Naive thymus-derived CD4-positive, alpha-beta T cell (primary cell): ENCODE measurements at regions of chr19 and their contacts with region 1.

Region 1: DNA sequence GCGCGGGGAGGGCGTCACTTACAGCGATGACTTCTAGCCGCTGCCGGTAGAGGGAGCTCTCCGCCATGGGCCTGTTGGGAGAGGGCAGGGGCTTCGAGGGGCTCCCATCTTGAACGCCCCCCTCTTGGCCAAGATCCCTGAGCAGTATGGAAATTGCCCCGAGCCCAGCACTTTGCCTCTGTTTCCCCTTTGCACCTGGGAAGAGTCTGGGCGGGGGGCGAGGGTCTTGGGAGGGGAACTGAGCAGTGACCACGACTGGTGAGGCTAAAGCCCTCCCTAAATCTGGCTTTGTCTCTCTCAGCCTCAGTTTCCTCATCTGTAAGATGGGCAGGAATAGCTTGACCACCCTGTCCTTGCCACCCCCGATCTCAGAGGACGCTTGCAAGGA is 2.8 kb downstream of the PALM3 start:
- DNase-seq: peak in 5 of 9 donors; percentile 30 to 66 (median 46)
- ATAC-seq: peak; percentile 68
- H3K4me3 ChIP-seq: no peak overlapping the region
- H3K4me3 Mint-ChIP-seq: peak overlapping the region in 9 of 10 donors; percentile 19 to 81 (median 55)
- H3K27ac ChIP-seq: no peak overlapping the region
- H3K27ac Mint-ChIP-seq: no peak overlapping the region
- H3K4me1 ChIP-seq: peaks cover 9 to 10% of the 10 kb centered on the region in 2 donors
- H3K4me1 Mint-ChIP-seq: peaks cover 9 to 26% (median 19%) of the 10 kb centered on the region in 7 donors
- H3K27me3 ChIP-seq: peaks cover 5 to 21% of the 10 kb centered on the region in 2 donors
- H3K27me3 Mint-ChIP-seq: peaks cover 16 to 48% (median 27%) of the 10 kb centered on the region in 5 donors

Region 2: DNA sequence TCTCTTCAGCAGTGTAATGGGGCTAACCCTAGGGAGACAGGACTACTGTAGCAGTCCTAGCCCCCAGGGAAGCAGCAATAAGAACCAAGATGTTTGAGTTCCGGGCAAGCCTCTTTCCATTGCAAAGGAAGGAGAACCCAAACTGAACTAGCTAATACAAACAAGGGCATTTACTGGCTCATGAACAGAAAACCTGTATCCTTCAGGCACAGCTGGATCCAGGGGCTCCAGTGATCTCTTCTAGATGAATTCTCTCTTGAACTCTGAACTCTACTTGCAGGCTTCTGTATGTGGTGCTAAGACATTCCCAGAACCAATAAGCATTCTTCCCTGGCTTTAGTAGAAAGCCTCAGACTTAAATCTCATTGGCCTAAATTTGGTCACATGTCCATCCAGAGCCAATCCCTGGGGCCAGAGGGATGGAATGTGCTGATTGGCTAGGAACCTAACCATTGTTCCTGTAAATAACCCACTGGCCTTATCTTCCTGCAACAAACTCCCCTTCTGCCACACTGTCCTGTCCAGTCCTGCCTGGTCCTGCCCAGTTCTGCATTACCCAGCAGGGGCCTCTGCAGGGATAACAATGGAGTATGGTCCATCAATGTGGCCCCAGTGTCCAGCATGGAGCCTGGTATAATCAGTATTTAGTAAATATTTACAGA is 116.9 kb before region 1 on chr19:
- CTCF ChIA-PET with region 1: no interaction called
- POLR2A ChIA-PET with region 1: no interaction called
- intact Hi-C with region 1: no loop called
- DNase-seq: no peak
- ATAC-seq: no peak
- H3K4me3 ChIP-seq: no peak overlapping the region
- H3K4me3 Mint-ChIP-seq: no peak overlapping the region
- H3K27ac ChIP-seq: no peak overlapping the region
- H3K27ac Mint-ChIP-seq: no peak overlapping the region
- H3K4me1 ChIP-seq: no peaks in the 10 kb centered on the region
- H3K4me1 Mint-ChIP-seq: peaks cover 0 to 4% (median 0%) of the 10 kb centered on the region in 7 donors
- H3K27me3 ChIP-seq: no peaks in the 10 kb centered on the region
- H3K27me3 Mint-ChIP-seq: peaks cover 0 to 8% (median 5%) of the 10 kb centered on the region in 5 donors

Region 3: GRCh38 chr19:13987101-13987890 is 71.8 kb before region 1 on chr19:
- CTCF ChIA-PET with region 1: no interaction called
- POLR2A ChIA-PET with region 1: no interaction called
- intact Hi-C with region 1: no loop called
- DNase-seq: no peak
- ATAC-seq: no peak
- H3K4me3 ChIP-seq: peak overlapping the region; percentile 48
- H3K4me3 Mint-ChIP-seq: peak overlapping the region; percentile 61 to 85 (median 76)
- H3K27ac ChIP-seq: peak overlapping the region; percentile 97
- H3K27ac Mint-ChIP-seq: peak overlapping the region; percentile 92 to 99 (median 96)
- H3K4me1 ChIP-seq: peaks cover 39 to 65% of the 10 kb centered on the region in 2 donors
- H3K4me1 Mint-ChIP-seq: peaks cover 51 to 90% (median 69%) of the 10 kb centered on the region in 7 donors
- H3K27me3 ChIP-seq: no peaks in the 10 kb centered on the region
- H3K27me3 Mint-ChIP-seq: no peaks in the 10 kb centered on the region

Region 4: DNA sequence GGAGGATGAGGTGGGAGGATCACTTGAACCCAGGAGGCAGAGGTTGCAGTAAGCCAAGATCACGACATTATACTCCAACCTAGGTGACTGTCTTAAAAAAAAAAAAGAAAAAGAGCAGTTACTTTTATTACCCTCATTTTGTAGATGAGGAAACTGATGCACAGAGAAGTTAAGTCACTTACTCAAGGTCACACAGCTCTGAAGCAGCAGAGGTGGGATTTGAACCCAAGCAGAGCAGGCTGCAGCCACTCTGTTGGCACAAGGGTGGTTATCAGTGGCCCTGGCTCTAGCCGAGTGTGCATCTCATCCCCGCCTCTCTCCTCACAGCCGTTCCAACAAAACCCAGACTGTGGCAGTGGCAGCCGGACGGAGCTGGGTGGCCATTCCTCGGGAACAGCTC is 19.9 kb before region 1 on chr19:
- CTCF ChIA-PET with region 1: interaction called, 10 read pairs
- POLR2A ChIA-PET with region 1: interaction called, 3 read pairs
- intact Hi-C with region 1: no loop called
- DNase-seq: no peak
- ATAC-seq: no peak
- H3K4me3 ChIP-seq: no peak overlapping the region
- H3K4me3 Mint-ChIP-seq: no peak overlapping the region
- H3K27ac ChIP-seq: no peak overlapping the region
- H3K27ac Mint-ChIP-seq: peak overlapping the region in 5 of 9 donors; percentile 12 to 79 (median 64)
- H3K4me1 ChIP-seq: peaks cover 0 to 6% of the 10 kb centered on the region in 2 donors
- H3K4me1 Mint-ChIP-seq: peaks cover 11 to 48% (median 26%) of the 10 kb centered on the region in 7 donors
- H3K27me3 ChIP-seq: no peaks in the 10 kb centered on the region
- H3K27me3 Mint-ChIP-seq: no peaks in the 10 kb centered on the region